HCT116 (cell line): ENCODE measurements at regions of chr1 and their contacts with region 1.

Region 1: DNA sequence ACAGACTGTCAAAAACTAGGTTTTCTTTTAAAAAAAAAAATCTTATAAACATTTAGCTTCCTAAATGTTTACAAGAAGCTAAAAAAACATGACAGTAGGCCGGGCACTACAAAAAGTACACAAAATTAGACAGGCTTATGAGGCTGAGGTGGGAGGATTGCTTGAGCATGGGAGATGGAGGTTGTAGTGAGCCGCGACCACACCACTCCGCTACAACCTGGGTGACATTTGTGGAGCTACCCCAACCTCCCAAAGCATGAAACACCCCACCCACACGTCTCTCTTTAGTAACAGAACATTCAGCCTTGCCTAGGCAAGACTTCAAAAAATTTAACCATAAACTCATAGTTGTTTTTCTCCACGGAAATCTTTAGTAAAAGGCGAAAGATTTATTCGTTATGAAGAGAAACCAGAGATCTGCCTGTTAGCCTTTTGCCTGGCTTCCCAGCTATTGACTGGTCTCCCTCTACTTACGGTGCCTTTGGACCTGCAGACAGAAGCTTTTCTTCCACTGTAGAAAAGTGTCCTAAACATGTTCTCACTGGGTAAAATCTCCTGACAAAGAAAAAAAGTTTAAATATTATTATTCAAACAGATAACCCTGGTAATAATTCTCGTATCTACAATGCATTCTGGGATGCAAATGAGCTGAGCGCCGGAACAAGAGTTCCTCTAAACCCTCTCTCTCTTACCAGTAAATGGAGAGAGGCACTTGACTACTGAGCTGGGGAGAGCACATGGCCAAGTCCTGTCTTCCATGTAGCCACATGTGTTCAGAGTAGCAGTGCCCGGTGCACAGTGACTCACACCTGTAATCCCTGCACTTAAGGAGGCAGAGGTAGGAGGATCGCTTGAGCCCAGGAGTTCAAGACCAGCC is 9.2 kb downstream of the RNU5D-1 start:
- DNase-seq: peak; percentile 99
- ATAC-seq: peak; percentile 91
- H3K4me3 ChIP-seq: no peak overlapping the region
- H3K27ac ChIP-seq: peak overlapping the region; percentile 75
- H3K4me1 ChIP-seq: peaks cover 10 to 33% of the 10 kb centered on the region in 2 experiments
- H3K27me3 ChIP-seq: no peaks in the 10 kb centered on the region
- CTCF ChIP-seq: no peak
- POLR2A ChIP-seq: peak; percentile 100
- RAD21 ChIP-seq: no peak

Region 2: GRCh38 chr1:44674113-44675000 is 47.4 kb before region 1 on chr1 and contains the starts of genes ARMH1 and TMEM53:
- CTCF ChIA-PET with region 1: interaction called, 3 read pairs
- POLR2A ChIA-PET with region 1: interaction called, 29 read pairs
- RAD21 ChIA-PET with region 1: no interaction called
- intact Hi-C with region 1: no loop called
- DNase-seq: peak; percentile 98
- ATAC-seq: peak; percentile 96
- H3K4me3 ChIP-seq: peak within 1 kb of the TSS; percentile 63 to 73
- H3K27ac ChIP-seq: peak within 1 kb of the TSS; percentile 72
- H3K4me1 ChIP-seq: peaks cover 29 to 45% of the 10 kb centered on the region in 2 experiments
- H3K27me3 ChIP-seq: no peaks in the 10 kb centered on the region
- CTCF ChIP-seq: no peak; a peak in 1 of 6 replicates
- POLR2A ChIP-seq: peak; percentile 26
- RAD21 ChIP-seq: no peak
- total RNA-seq, gene ARMH1: 3.2 TPM
- total RNA-seq, gene TMEM53: 10.8 TPM

Region 3: DNA sequence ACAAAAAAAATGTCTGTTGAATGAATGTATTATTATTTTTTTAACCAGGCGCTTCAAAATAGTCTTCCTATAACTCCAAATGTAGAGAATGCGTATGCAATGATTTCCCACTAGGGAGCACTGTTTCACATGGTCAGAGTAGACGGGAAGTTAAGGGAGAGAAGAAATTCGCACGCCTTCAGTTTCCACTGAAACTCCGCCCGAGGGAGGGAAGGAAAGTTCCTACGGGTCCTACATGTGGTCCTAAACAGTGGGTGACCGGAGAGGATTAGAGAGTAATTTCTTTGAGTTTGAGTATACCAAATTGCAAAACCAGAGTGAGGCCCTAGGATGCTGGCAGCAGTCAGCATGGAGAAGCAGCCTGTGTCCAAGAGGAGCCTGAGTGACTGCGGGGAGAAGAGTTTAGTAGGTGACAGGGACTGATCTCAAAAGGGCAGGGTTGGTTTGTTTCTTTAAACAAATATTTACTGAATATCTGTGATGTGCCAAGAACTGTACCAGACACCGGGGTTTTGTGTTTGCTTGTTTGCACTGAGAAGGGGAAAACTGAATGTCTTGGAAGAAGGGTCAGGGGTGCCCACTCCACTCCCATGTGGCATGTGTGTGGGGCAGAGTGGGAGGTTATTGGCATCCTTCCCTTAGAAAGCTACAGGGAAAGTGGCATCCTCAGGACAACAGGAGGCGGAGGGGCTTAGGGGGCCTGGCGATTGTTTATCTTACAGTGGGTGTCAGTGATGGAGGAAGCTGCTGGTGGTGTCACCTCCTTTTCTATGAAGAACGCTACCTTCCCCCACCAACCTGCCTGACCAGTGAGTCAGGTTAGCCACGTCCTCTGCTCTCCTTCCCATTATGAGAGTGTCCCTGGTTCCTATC is 13.5 kb before region 1 on chr1:
- CTCF ChIA-PET with region 1: interaction called, 3 read pairs
- POLR2A ChIA-PET with region 1: interaction called, 64 read pairs
- RAD21 ChIA-PET with region 1: no interaction called
- intact Hi-C with region 1: no loop called
- DNase-seq: peak; percentile 53
- ATAC-seq: peak; percentile 75
- H3K4me3 ChIP-seq: peak overlapping the region in 1 of 2 experiments; percentile 25; a peak in 1 of 4 replicates
- H3K27ac ChIP-seq: no peak overlapping the region
- H3K4me1 ChIP-seq: peaks cover 18 to 41% of the 10 kb centered on the region in 2 experiments
- H3K27me3 ChIP-seq: 0 out of 2 replicates have a peak, but pooled peaks cover 4% of the 10 kb centered on the region
- CTCF ChIP-seq: peak; percentile 69 to 82 (median 82)
- POLR2A ChIP-seq: no peak
- RAD21 ChIP-seq: peak; percentile 73

Region 4: GRCh38 chr1:44792783-44793714 is 71.3 kb after region 1 on chr1:
- CTCF ChIA-PET with region 1: no interaction called
- POLR2A ChIA-PET with region 1: interaction called, 47 read pairs
- RAD21 ChIA-PET with region 1: no interaction called
- intact Hi-C with region 1: no loop called
- DNase-seq: no peak
- ATAC-seq: no peak
- H3K4me3 ChIP-seq: peak overlapping the region in 1 of 2 experiments; percentile 8; a peak in 1 of 4 replicates
- H3K27ac ChIP-seq: peak overlapping the region; percentile 58
- H3K4me1 ChIP-seq: peaks cover 14 to 30% of the 10 kb centered on the region in 2 experiments; a peak in 3 of 4 replicates
- H3K27me3 ChIP-seq: no peaks in the 10 kb centered on the region
- CTCF ChIP-seq: no peak
- POLR2A ChIP-seq: no peak
- RAD21 ChIP-seq: no peak

Region 5: GRCh38 chr1:44819608-44820327 is 98.0 kb after region 1 on chr1:
- CTCF ChIA-PET with region 1: no interaction called
- POLR2A ChIA-PET with region 1: interaction called, 104 read pairs
- RAD21 ChIA-PET with region 1: interaction called in 1 of 2 experiments, 3 read pairs
- intact Hi-C with region 1: no loop called
- DNase-seq: peak; percentile 96
- ATAC-seq: peak; percentile 93
- H3K4me3 ChIP-seq: peak overlapping the region; percentile 36 to 48
- H3K27ac ChIP-seq: peak overlapping the region; percentile 83
- H3K4me1 ChIP-seq: peaks cover 11 to 37% of the 10 kb centered on the region in 2 experiments
- H3K27me3 ChIP-seq: no peaks in the 10 kb centered on the region
- CTCF ChIP-seq: 0 out of 6 replicates have a peak, but pooled peaks of 1 of the 3 experiments have one; percentile 9
- POLR2A ChIP-seq: peak; percentile 100
- RAD21 ChIP-seq: peak; percentile 52

Region 6: DNA sequence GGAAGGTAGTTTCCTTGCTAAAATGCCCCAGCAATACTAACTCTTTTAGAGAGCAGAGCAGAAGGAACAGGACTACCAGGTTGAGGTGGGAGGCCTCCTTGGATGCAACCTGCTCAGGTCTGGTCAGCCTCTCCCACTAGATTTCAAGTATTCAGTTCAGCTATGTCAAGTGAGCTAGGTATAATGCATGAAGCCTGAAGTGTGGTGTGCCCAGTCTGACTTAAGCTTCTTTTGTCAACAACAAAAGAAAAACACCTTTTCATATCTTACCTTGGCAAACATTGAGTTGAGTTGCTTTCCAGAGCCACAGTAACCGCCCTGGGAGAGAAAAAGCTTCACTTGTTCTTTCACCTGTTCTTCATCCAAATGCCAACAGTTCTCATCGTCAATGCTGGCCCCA is 338.1 kb after region 1 on chr1:
- CTCF ChIA-PET with region 1: no interaction called
- POLR2A ChIA-PET with region 1: no interaction called
- RAD21 ChIA-PET with region 1: no interaction called
- intact Hi-C with region 1: no loop called
- DNase-seq: no peak
- ATAC-seq: no peak
- H3K4me3 ChIP-seq: no peak overlapping the region
- H3K27ac ChIP-seq: no peak overlapping the region
- H3K4me1 ChIP-seq: no peaks in the 10 kb centered on the region
- H3K27me3 ChIP-seq: no peaks in the 10 kb centered on the region
- CTCF ChIP-seq: no peak
- POLR2A ChIP-seq: no peak
- RAD21 ChIP-seq: no peak

Region 7: GRCh38 chr1:45499415-45499769 is 777.7 kb after region 1 on chr1:
- CTCF ChIA-PET with region 1: no interaction called
- POLR2A ChIA-PET with region 1: interaction called, 12 read pairs
- RAD21 ChIA-PET with region 1: no interaction called
- intact Hi-C with region 1: no loop called
- DNase-seq: no peak
- ATAC-seq: no peak; the same call in 1 of the 2 replicates
- H3K4me3 ChIP-seq: peak overlapping the region; percentile 68 to 92
- H3K27ac ChIP-seq: peak overlapping the region; percentile 36
- H3K4me1 ChIP-seq: peaks cover 2 to 18% of the 10 kb centered on the region in 2 experiments; a peak in 3 of 4 replicates
- H3K27me3 ChIP-seq: no peaks in the 10 kb centered on the region
- CTCF ChIP-seq: no peak
- POLR2A ChIP-seq: peak; percentile 3
- RAD21 ChIP-seq: no peak